GM12878 (cell line): ENCODE measurements at regions of chr1 and their contacts with region 1.

Region 1: DNA sequence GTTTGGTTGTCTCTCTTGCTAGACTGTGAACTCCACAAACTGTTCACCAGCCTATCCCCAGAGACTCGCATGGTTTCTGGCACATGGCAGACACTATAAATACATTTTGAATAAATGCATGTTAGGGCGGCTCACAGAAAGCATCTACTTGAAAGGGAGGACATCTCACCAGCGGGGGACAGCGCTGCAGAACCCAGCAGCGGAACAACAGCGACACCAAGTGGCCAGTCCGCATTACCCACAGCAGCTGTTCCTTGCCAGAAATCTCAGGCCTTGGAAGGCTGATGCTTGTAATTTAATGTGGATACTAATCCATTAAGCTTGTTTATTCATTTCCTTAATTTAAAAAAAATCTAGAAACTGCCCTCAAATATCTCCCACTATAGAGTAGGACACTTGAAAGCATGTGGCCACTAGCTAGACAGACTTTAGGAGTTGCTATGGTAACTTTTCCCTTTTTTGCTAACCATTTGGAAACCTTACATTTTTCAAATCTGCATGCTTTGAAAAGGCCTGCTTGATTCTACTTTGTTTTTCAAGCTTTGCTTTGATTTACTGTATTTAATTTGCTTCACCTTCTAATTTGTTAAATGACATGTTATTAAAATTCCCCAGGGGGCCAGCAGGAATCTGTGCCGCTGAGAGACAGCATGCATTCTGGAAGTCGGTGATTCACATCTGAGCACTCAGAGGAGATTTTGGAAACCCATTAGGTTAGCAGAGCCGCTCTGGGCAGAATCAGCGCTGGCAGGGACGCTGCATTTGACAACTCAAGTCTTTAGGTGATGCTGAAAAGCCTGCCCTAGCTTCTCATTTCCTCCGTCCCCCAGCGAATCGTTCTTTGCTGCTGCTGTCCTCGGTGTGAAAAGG is 63.5 kb upstream of the SSX2IP start:
- DNase-seq: peak; percentile 23
- ATAC-seq: peak; percentile 96
- H3K4me3 ChIP-seq: no peak overlapping the region
- H3K27ac ChIP-seq: no peak overlapping the region
- H3K4me1 ChIP-seq: no peaks in the 10 kb centered on the region
- H3K27me3 ChIP-seq: no peaks in the 10 kb centered on the region
- CTCF ChIP-seq: peak; percentile 90 to 93 (median 92)
- EP300 ChIP-seq: no peak
- POLR2A ChIP-seq: no peak
- RAD21 ChIP-seq: peak; percentile 99

Region 2: DNA sequence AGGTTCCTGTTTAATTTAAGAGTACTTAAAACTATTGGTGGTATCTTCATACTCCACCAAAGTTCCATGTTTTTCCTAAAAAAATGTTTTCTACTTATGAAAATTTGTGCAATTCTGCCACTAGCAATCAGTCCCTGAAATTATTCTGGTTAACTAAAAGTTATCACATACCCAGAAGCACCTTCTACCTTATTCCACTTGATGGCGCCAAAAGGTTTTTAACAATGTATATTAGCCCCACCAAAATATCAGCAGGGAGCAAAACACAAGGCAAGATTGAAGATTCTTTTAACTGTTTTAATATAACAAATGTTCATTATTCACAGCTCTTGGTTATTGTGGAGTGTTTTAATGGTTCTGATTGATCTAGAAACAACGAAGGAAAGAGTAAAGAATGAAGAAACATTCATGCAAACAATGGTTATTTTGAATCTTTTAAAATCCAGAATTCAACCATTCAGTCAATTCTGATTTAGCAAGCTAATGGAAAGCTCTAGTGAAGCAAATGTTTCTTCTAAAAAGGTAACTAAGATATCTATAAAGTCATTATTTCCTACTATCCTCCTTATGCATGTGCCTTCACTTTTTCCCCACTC is 822.0 kb before region 1 on chr1:
- CTCF ChIA-PET with region 1: interaction called, 8 read pairs
- POLR2A ChIA-PET with region 1: no interaction called
- RAD21 ChIA-PET with region 1: interaction called, 3 read pairs
- SMC1A ChIA-PET with region 1: interaction called, 3 read pairs
- in situ Hi-C with region 1: no loop called
- intact Hi-C with region 1: loop called (anchors 5 kb)
- DNase-seq: no peak
- ATAC-seq: peak; percentile 84
- H3K4me3 ChIP-seq: no peak overlapping the region
- H3K27ac ChIP-seq: no peak overlapping the region
- H3K4me1 ChIP-seq: no peaks in the 10 kb centered on the region
- H3K27me3 ChIP-seq: no peaks in the 10 kb centered on the region; a peak in 1 of 4 replicates
- CTCF ChIP-seq: peak; percentile 44 to 70 (median 59); a peak in 5 of 6 replicates
- EP300 ChIP-seq: no peak
- POLR2A ChIP-seq: no peak
- RAD21 ChIP-seq: peak; percentile 92

Region 3: GRCh38 chr1:84433258-84434080 is 320.3 kb before region 1 on chr1:
- CTCF ChIA-PET with region 1: interaction called, 13 read pairs
- POLR2A ChIA-PET with region 1: no interaction called
- RAD21 ChIA-PET with region 1: interaction called, 6 read pairs
- SMC1A ChIA-PET with region 1: interaction called, 6 read pairs
- in situ Hi-C with region 1: loop called (anchors 5 kb)
- intact Hi-C with region 1: loop called (anchors 2 kb)
- DNase-seq: peak; percentile 21
- ATAC-seq: peak; percentile 79
- H3K4me3 ChIP-seq: no peak overlapping the region
- H3K27ac ChIP-seq: no peak overlapping the region
- H3K4me1 ChIP-seq: peaks cover 5% of the 10 kb centered on the region
- H3K27me3 ChIP-seq: no peaks in the 10 kb centered on the region
- CTCF ChIP-seq: peak; percentile 60 to 82 (median 66)
- EP300 ChIP-seq: peak in 1 of 2 experiments; percentile 32; a peak in 1 of 4 replicates
- POLR2A ChIP-seq: no peak
- RAD21 ChIP-seq: peak; percentile 94

Region 4: GRCh38 chr1:84620720-84621313 is 132.9 kb before region 1 on chr1:
- CTCF ChIA-PET with region 1: interaction called, 48 read pairs
- POLR2A ChIA-PET with region 1: no interaction called
- RAD21 ChIA-PET with region 1: interaction called, 5 read pairs
- SMC1A ChIA-PET with region 1: interaction called, 26 read pairs
- in situ Hi-C with region 1: no loop called
- intact Hi-C with region 1: loop called (anchors 2 kb)
- DNase-seq: peak; percentile 38
- ATAC-seq: peak; percentile 98
- H3K4me3 ChIP-seq: peak overlapping the region; percentile 78
- H3K27ac ChIP-seq: peak overlapping the region; percentile 47
- H3K4me1 ChIP-seq: no peaks in the 10 kb centered on the region
- H3K27me3 ChIP-seq: no peaks in the 10 kb centered on the region; a peak in 1 of 4 replicates
- CTCF ChIP-seq: peak; percentile 64 to 79 (median 73)
- EP300 ChIP-seq: no peak
- POLR2A ChIP-seq: peak; percentile 44
- RAD21 ChIP-seq: peak; percentile 85

Region 5: GRCh38 chr1:84690397-84691121 is 63.2 kb before region 1 on chr1 and contains the start of gene SSX2IP:
- CTCF ChIA-PET with region 1: interaction called, 21 read pairs
- POLR2A ChIA-PET with region 1: no interaction called
- RAD21 ChIA-PET with region 1: interaction called, 5 read pairs
- SMC1A ChIA-PET with region 1: interaction called, 8 read pairs
- in situ Hi-C with region 1: no loop called
- intact Hi-C with region 1: no loop called
- DNase-seq: peak; percentile 65
- ATAC-seq: peak; percentile 93
- H3K4me3 ChIP-seq: peak within 1 kb of the TSS; percentile 98
- H3K27ac ChIP-seq: peak within 1 kb of the TSS; percentile 78
- H3K4me1 ChIP-seq: peaks cover 17% of the 10 kb centered on the region; the same call in 1 of the 2 replicates
- H3K27me3 ChIP-seq: no peaks in the 10 kb centered on the region
- CTCF ChIP-seq: no peak
- EP300 ChIP-seq: no peak
- POLR2A ChIP-seq: peak; percentile 85
- RAD21 ChIP-seq: no peak
- polyA plus RNA-seq, gene SSX2IP: 3.3 to 3.9 TPM

Region 6: GRCh38 chr1:84742653-84743052 is 11.1 kb before region 1 on chr1:
- CTCF ChIA-PET with region 1: interaction called, 25 read pairs
- POLR2A ChIA-PET with region 1: no interaction called
- RAD21 ChIA-PET with region 1: interaction called, 6 read pairs
- SMC1A ChIA-PET with region 1: interaction called, 8 read pairs
- in situ Hi-C with region 1: no loop called
- intact Hi-C with region 1: no loop called
- DNase-seq: no peak
- ATAC-seq: peak; percentile 86
- H3K4me3 ChIP-seq: no peak overlapping the region
- H3K27ac ChIP-seq: no peak overlapping the region
- H3K4me1 ChIP-seq: no peaks in the 10 kb centered on the region
- H3K27me3 ChIP-seq: no peaks in the 10 kb centered on the region; a peak in 2 of 4 replicates
- CTCF ChIP-seq: no peak
- EP300 ChIP-seq: no peak
- POLR2A ChIP-seq: no peak
- RAD21 ChIP-seq: no peak